Activated CD4-positive, alpha-beta memory T cell treated with anti-CD3 and anti-CD28 coated beads, Interleukin-2, amount 10 ng/mL, durations not matched to agents 7 days and 5 days (primary cell): ENCODE measurements at regions of chrX and their contacts with region 1.

Region 1: DNA sequence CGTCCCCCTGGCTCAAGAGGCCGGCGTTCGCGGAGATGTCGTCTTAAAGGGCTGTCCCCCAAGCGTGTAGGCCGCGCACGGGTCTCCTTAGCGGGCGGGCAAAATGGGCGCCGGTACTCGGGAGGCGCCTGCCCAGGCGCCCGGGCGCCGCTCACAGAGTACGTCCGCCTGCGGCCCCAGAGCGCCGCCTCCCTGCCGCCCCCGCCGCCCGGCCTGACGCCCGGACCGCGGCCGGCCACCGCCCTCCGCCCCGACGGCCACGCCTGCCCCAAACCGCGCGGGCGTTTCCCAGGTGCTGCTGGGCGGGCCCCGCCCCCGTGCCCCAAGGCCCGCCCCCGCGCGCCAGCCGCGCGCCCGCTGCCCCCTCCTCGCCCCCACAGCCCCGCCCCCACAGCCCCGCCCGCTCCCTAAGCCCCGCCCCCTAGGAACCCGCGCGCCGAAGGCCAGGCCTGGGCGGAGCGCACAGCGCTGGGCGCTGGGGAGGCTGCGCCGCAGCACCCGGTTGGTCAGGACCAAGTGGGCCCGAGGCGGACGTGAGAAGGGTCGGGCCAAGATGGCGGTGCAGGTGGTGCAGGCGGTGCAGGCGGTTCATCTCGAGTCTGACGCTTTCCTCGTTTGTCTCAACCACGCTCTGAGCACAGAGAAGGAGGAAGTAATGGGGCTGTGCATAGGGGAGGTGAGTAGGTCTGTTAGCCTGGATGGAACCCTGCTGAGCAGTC is at the starts of genes BRCC3, CMC4 and MTCP1:
- DNase-seq: peak; percentile 83
- H3K4me3 Mint-ChIP-seq: peak within 1 kb of the TSS; percentile 90
- H3K27ac Mint-ChIP-seq: peak within 1 kb of the TSS; percentile 86
- H3K4me1 Mint-ChIP-seq: peaks cover 61% of the 10 kb centered on the region
- H3K27me3 Mint-ChIP-seq: no peaks in the 10 kb centered on the region
- total RNA-seq, gene BRCC3: 23.5 to 25.2 TPM
- total RNA-seq, gene CMC4: 4.8 to 5.9 TPM
- total RNA-seq, gene MTCP1: 20.2 TPM

Region 2: DNA sequence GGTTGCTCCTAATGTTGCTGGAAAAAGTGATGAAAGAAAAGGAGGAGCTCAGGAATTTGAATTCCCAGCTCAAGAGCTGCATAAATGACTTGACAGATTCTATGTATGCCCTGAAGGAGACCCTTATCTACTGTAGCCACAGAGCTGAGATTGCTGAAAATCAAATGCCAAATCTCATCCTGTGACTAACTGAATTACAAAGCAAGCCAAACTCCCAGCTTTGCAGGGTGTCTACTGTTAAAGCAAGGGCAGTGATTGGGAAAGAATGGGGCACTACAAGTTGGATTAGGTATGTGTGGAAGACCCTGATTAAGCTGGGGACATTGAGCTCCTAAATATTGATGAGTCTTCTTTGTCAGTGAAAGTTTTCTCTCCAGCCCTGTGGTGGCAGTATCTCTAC is 215.9 kb before region 1 on chrX:
- CTCF ChIA-PET with region 1: no interaction called
- POLR2A ChIA-PET with region 1: no interaction called
- DNase-seq: no peak
- H3K4me3 Mint-ChIP-seq: no peak overlapping the region
- H3K27ac Mint-ChIP-seq: no peak overlapping the region
- H3K4me1 Mint-ChIP-seq: no peaks in the 10 kb centered on the region
- H3K27me3 Mint-ChIP-seq: no peaks in the 10 kb centered on the region

Region 3: GRCh38 chrX:155026726-155027508 is 44.2 kb before region 1 on chrX and contains the start of gene FUNDC2:
- CTCF ChIA-PET with region 1: interaction called, 3 read pairs
- POLR2A ChIA-PET with region 1: interaction called, 12 read pairs
- DNase-seq: peak; percentile 94
- H3K4me3 Mint-ChIP-seq: peak within 1 kb of the TSS; percentile 82
- H3K27ac Mint-ChIP-seq: peak within 1 kb of the TSS; percentile 96
- H3K4me1 Mint-ChIP-seq: peaks cover 26% of the 10 kb centered on the region
- H3K27me3 Mint-ChIP-seq: peaks cover 8% of the 10 kb centered on the region
- total RNA-seq, gene FUNDC2: 45.7 to 49.9 TPM